ENCODE measurements at regions of chr22 and their contacts with region 1.

Region 1: DNA sequence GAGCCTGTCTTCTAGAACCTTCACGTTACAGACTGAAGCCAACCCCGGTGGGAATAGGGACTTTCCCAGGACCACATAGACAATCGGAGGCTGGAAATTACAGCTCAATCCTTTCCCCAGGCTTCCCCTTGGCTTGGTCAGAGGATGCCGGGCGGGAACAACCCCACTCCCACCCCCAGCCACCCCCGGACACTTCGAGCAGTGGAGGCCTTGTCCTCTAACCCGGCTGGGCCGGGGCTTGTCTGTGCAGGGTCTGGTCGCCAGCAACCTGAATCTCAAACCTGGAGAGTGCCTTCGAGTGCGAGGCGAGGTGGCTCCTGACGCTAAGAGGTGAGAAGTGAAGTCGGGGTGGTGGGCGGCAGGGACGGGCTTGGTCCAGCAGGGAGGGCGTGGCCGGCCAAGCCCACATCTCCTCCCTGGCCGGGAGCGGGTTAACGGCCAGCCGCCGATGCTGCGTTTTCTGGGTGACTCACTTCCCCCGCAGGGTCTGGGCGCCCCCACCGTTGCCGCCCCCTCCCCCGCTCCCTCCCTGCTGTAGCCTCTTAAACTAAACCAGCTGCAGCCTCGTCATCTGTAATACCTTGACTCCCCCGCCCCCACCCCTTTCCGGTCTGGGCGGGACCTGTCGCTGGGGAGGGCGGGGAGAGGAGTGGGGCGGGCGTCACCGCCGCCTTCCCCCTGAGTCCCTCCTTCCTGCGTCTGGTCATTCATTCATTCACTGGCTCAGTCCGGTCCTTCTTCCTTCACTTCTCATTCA is 1.5 kb downstream of the LGALS1 start:
- DNase-seq: peak; percentile 82 to 95 (median 94)
- ATAC-seq: peak; percentile 93
- H3K4me3 ChIP-seq: peak overlapping the region; percentile 60
- H3K4me3 Mint-ChIP-seq: peak overlapping the region; percentile 82 to 99 (median 91)
- H3K27ac ChIP-seq: peak overlapping the region; percentile 99
- H3K27ac Mint-ChIP-seq: peak overlapping the region; percentile 94 to 100 (median 100)
- H3K4me1 ChIP-seq: peaks cover 29 to 37% of the 10 kb centered on the region in 2 donors
- H3K4me1 Mint-ChIP-seq: peaks cover 14 to 68% (median 60%) of the 10 kb centered on the region in 7 donors
- H3K27me3 ChIP-seq: no peaks in the 10 kb centered on the region
- H3K27me3 Mint-ChIP-seq: no peaks in the 10 kb centered on the region

Region 2: GRCh38 chr22:37229805-37230672 is 446.9 kb before region 1 on chr22:
- CTCF ChIA-PET with region 1: no interaction called
- POLR2A ChIA-PET with region 1: no interaction called
- intact Hi-C with region 1: loop called in 1 of 2 experiments (anchors 10 kb)
- DNase-seq: peak; percentile 60 to 93 (median 89)
- ATAC-seq: peak; percentile 93
- H3K4me3 ChIP-seq: peak overlapping the region; percentile 54
- H3K4me3 Mint-ChIP-seq: peak overlapping the region; percentile 75 to 99 (median 86)
- H3K27ac ChIP-seq: peak overlapping the region; percentile 90
- H3K27ac Mint-ChIP-seq: peak overlapping the region; percentile 96 to 100 (median 99)
- H3K4me1 ChIP-seq: peaks cover 80 to 92% of the 10 kb centered on the region in 2 donors
- H3K4me1 Mint-ChIP-seq: peaks cover 75 to 92% (median 87%) of the 10 kb centered on the region in 7 donors
- H3K27me3 ChIP-seq: no peaks in the 10 kb centered on the region
- H3K27me3 Mint-ChIP-seq: no peaks in the 10 kb centered on the region

Region 3: GRCh38 chr22:37538590-37539357 is 138.1 kb before region 1 on chr22:
- CTCF ChIA-PET with region 1: no interaction called
- POLR2A ChIA-PET with region 1: no interaction called
- intact Hi-C with region 1: loop called in 1 of 2 experiments (anchors 1 kb)
- DNase-seq: peak; percentile 78 to 90 (median 87)
- ATAC-seq: peak; percentile 99
- H3K4me3 ChIP-seq: no peak overlapping the region
- H3K4me3 Mint-ChIP-seq: peak overlapping the region; percentile 15 to 64 (median 48)
- H3K27ac ChIP-seq: no peak overlapping the region
- H3K27ac Mint-ChIP-seq: peak overlapping the region in 5 of 9 donors; percentile 1 to 37 (median 7)
- H3K4me1 ChIP-seq: peaks cover 8 to 14% of the 10 kb centered on the region in 2 donors
- H3K4me1 Mint-ChIP-seq: peaks cover 14 to 44% (median 17%) of the 10 kb centered on the region in 7 donors
- H3K27me3 ChIP-seq: peaks cover 0 to 4% of the 10 kb centered on the region in 2 donors
- H3K27me3 Mint-ChIP-seq: peaks cover 4 to 18% (median 12%) of the 10 kb centered on the region in 5 donors

Region 4: DNA sequence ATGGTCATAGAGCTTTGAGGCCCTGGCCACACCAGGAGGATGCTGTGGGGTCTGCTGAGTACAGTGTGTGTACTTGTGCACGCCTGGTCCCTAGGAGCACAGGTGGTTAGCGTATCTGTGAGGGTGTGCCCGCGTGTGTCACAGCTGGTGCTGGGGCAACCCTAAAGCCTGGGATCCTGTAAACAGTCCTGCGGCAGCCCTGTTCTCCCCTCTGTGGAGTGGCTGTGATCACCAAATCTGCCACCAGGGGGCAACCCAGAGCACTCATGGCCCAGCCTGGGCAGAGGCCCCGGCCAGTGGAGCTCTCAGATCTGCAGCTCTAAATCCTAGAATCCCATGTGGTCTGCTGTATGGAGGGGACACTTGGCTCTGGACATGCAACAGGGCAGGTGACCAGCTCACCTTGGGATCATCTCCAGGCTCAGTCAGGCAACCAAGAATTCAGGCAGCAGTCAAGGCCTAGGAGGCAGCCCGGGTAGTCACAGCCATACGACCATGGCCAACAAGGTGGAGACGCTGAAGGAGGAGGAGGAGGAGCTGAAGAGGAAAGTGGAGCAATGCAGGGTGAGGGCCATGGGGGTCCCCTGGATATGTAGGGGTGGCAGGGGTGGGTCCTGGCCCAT is 33.6 kb before region 1 on chr22:
- CTCF ChIA-PET with region 1: interaction called, 254 read pairs
- POLR2A ChIA-PET with region 1: interaction called, 62 read pairs
- intact Hi-C with region 1: loop called (anchors 1 kb)
- DNase-seq: peak; percentile 65 to 90 (median 81)
- ATAC-seq: peak; percentile 83
- H3K4me3 ChIP-seq: peak overlapping the region; percentile 45
- H3K4me3 Mint-ChIP-seq: peak overlapping the region; percentile 29 to 75 (median 55)
- H3K27ac ChIP-seq: peak overlapping the region; percentile 24
- H3K27ac Mint-ChIP-seq: peak overlapping the region; percentile 51 to 89 (median 74)
- H3K4me1 ChIP-seq: peaks cover 34 to 39% of the 10 kb centered on the region in 2 donors
- H3K4me1 Mint-ChIP-seq: peaks cover 12 to 47% (median 30%) of the 10 kb centered on the region in 7 donors
- H3K27me3 ChIP-seq: no peaks in the 10 kb centered on the region
- H3K27me3 Mint-ChIP-seq: no peaks in the 10 kb centered on the region

Region 5: GRCh38 chr22:37745548-37746365 is 68.8 kb after region 1 on chr22:
- CTCF ChIA-PET with region 1: no interaction called
- POLR2A ChIA-PET with region 1: no interaction called
- intact Hi-C with region 1: loop called in 1 of 2 experiments (anchors 1 kb)
- DNase-seq: peak; percentile 67 to 90 (median 78)
- ATAC-seq: peak; percentile 97
- H3K4me3 ChIP-seq: peak overlapping the region; percentile 74
- H3K4me3 Mint-ChIP-seq: peak overlapping the region; percentile 82 to 96 (median 92)
- H3K27ac ChIP-seq: peak overlapping the region; percentile 77
- H3K27ac Mint-ChIP-seq: peak overlapping the region; percentile 75 to 93 (median 87)
- H3K4me1 ChIP-seq: peaks cover 9 to 18% of the 10 kb centered on the region in 2 donors
- H3K4me1 Mint-ChIP-seq: peaks cover 13 to 36% (median 26%) of the 10 kb centered on the region in 7 donors
- H3K27me3 ChIP-seq: no peaks in the 10 kb centered on the region
- H3K27me3 Mint-ChIP-seq: no peaks in the 10 kb centered on the region

Measured in naive thymus-derived CD4-positive, alpha-beta T cell (primary cell).